Calu3 (cell line): ENCODE measurements at regions of chr9 and their contacts with region 1.

Region 1: DNA sequence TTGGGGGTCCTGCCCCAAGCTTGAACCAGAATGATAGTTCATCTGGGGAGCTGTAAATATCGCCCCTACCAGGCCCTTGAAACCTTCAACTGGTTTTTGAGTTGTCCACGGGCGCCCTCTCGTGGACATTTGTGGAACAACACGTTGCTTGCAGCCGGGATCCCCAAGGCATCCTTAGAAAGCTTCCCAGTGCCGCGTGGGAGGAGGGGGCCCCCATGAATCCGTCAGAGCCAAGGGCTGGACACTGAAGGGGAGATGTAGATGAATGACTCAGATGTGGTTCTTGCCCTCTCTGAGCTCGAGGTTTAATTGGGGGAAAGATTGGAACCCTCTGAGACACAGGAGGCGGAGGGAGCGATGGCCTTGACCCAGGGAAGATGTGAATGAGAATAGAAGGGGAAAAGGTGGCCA is 31.8 kb upstream of the ORM1 start:
- DNase-seq: peak; percentile 66
- H3K4me3 Mint-ChIP-seq: no peak overlapping the region
- H3K27ac Mint-ChIP-seq: no peak overlapping the region
- H3K4me1 Mint-ChIP-seq: peaks cover 8% of the 10 kb centered on the region
- H3K27me3 Mint-ChIP-seq: no peaks in the 10 kb centered on the region
- CTCF ChIP-seq: peak; percentile 73

Region 2: GRCh38 chr9:113682297-113682771 is 608.7 kb before region 1 on chr9:
- CTCF ChIA-PET with region 1: no interaction called
- intact Hi-C with region 1: loop called (anchors 5 kb)
- DNase-seq: peak; percentile 66
- H3K4me3 Mint-ChIP-seq: no peak overlapping the region
- H3K27ac Mint-ChIP-seq: no peak overlapping the region
- H3K4me1 Mint-ChIP-seq: no peaks in the 10 kb centered on the region
- H3K27me3 Mint-ChIP-seq: peaks cover 77% of the 10 kb centered on the region
- CTCF ChIP-seq: peak; percentile 61

Region 3: GRCh38 chr9:114082017-114082762 is 208.9 kb before region 1 on chr9:
- CTCF ChIA-PET with region 1: interaction called, 19 read pairs
- intact Hi-C with region 1: loop called (anchors 2 kb)
- DNase-seq: peak; percentile 88
- H3K4me3 Mint-ChIP-seq: peak overlapping the region; percentile 35
- H3K27ac Mint-ChIP-seq: peak overlapping the region; percentile 86
- H3K4me1 Mint-ChIP-seq: peaks cover 41% of the 10 kb centered on the region
- H3K27me3 Mint-ChIP-seq: no peaks in the 10 kb centered on the region
- CTCF ChIP-seq: peak; percentile 79

Region 4: GRCh38 chr9:114155263-114155972 is 135.7 kb before region 1 on chr9 and contains the start of gene COL27A1:
- CTCF ChIA-PET with region 1: no interaction called
- intact Hi-C with region 1: loop called (anchors 5 kb)
- DNase-seq: peak; percentile 89
- H3K4me3 Mint-ChIP-seq: peak within 1 kb of the TSS; percentile 58
- H3K27ac Mint-ChIP-seq: peak within 1 kb of the TSS; percentile 52
- H3K4me1 Mint-ChIP-seq: peaks cover 31% of the 10 kb centered on the region
- H3K27me3 Mint-ChIP-seq: peaks cover 16% of the 10 kb centered on the region
- CTCF ChIP-seq: peak; percentile 76
- total RNA-seq, gene COL27A1: 20.1 and 21.4 TPM in 2 replicates